A549 (cell line): ENCODE measurements at regions of chr17 and their contacts with region 1.

Region 1: GRCh38 chr17:43994272-43995149 is 9.9 kb upstream of the NAGS start:
- DNase-seq: peak; percentile 71 to 94
- ATAC-seq: peak; percentile 90 to 96
- H3K4me3 ChIP-seq: peak overlapping the region; percentile 45
- H3K27ac ChIP-seq: peak overlapping the region; percentile 70 to 86
- H3K4me1 ChIP-seq: 0 out of 3 replicates have a peak, but pooled peaks cover 3% of the 10 kb centered on the region
- CTCF ChIP-seq: peak; percentile 96
- EP300 ChIP-seq: no peak
- POLR2A ChIP-seq: no peak
- RAD21 ChIP-seq: peak; percentile 96 to 98

Region 2: DNA sequence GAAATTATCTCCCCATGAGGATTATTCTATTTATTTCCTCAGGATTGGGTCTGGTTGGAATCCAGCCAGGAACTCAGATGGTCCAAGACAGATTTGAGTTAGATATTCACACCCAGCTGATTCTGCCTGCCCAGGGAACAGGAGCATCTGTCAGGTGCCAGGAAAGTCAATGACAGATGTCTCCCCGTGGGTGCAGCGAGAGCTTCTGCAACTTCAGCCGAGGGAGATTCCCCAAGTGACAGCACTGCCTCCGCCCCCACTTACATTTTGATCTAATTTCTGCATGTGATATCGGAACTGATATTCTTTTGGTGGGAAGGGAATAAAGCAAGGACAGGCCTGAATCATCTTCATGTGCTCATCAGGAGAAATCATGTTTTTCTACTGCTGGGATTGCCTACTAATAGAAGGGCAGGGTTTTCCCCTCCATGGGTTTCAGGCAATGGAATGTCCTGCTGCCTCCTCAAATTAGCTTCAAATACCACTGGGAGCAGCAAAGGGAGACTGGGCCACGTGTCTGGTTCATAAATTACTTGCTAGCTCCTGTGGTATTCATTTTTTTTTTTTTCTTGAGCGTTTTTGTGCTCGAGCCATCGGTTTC is 526.4 kb before region 1 on chr17:
- CTCF ChIA-PET with region 1: no interaction called
- POLR2A ChIA-PET with region 1: no interaction called
- DNase-seq: no peak
- ATAC-seq: no peak
- H3K4me3 ChIP-seq: no peak overlapping the region
- H3K27ac ChIP-seq: peak overlapping the region; percentile 44 to 65; a peak in 4 of 6 replicates
- H3K4me1 ChIP-seq: peaks cover 31% of the 10 kb centered on the region
- CTCF ChIP-seq: no peak
- EP300 ChIP-seq: no peak
- POLR2A ChIP-seq: no peak
- RAD21 ChIP-seq: no peak

Region 3: DNA sequence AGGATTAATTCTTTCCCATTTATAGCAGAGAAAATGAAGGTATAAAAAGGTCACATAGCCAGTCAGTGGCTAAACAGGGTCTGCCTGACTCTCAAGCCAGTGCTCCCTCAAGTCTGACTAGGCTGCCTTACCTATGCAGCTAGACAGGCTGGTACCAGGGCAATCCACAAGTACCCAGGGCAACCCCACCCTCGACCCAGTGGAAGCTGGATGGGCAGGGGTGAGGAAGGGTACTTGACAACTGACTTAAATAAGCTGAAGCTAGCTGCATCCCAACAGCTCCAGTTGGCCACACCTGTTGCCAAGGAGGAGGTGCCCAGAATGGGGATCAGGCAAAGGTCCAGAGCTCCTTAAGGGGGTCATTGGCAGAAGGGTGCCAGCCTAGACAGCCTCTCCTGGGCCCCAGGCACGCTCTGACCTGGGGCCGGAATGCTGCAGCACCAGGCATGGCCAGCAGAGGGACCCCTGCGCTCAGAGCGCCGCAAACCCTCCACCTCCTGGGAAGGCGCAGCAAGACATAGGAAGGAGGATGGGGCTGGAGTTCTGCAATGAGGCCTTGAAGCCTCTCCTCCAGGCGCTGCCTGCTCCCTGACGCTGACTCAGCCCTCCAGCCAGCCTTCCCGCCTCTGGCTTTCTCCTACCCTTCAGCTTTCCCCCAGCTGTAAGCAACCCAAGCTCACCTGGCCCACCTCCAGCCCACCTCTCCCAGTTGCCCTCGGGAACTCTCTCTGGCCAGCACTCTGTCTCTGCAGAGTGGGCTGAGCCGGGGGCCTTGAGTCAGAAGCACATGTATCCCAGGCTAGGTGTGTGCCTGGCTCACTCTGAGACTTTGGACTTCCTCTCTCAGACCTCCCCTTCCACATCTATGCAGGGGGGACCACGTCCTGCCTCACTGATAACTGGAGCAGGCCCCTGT is 116.0 kb before region 1 on chr17:
- CTCF ChIA-PET with region 1: interaction called, 240 read pairs
- POLR2A ChIA-PET with region 1: no interaction called
- DNase-seq: peak; percentile 87 to 98
- ATAC-seq: peak; percentile 83 to 94
- H3K4me3 ChIP-seq: no peak overlapping the region
- H3K27ac ChIP-seq: peak overlapping the region; percentile 33 to 54; a peak in 4 of 6 replicates
- H3K4me1 ChIP-seq: peaks cover 5% of the 10 kb centered on the region
- CTCF ChIP-seq: peak; percentile 96
- EP300 ChIP-seq: no peak
- POLR2A ChIP-seq: no peak
- RAD21 ChIP-seq: peak; percentile 85 to 88

Region 4: DNA sequence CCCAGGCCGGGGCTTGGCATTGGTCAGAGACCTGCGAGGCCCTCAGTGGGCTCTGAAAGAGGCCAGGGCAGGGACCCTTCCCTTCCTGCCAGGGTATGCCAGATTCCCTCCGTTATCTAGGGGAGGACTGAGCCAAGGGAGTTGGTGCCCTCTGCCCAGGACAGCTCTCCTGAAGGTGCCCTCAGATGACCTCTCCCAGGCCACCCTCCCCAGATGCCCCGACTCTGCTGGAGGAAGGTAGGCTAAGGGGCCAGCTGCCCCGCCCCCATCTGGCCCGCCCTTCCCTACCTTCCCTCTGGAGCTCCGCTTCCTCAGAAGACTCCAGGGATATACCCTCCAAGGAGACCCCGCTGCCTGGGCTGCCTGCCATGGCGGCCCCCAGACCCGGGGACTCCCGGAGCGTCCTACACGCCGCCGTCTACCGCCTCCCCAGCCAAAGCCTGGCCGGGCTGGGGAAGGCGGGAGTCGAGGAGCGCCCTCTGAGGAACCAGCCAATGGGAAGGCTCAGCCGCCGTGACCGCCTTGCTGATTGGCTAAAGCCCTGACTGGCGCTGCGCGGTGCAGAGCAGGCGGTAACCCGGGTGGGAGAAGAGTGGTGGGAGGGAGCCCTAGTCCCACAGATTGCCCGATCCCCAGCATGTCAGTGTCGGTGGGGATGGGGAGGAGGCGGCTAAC is 94.2 kb before region 1 on chr17:
- CTCF ChIA-PET with region 1: interaction called, 11 read pairs
- POLR2A ChIA-PET with region 1: no interaction called
- DNase-seq: peak; percentile 88 to 100
- ATAC-seq: peak; percentile 95 to 99
- H3K4me3 ChIP-seq: peak overlapping the region; percentile 55
- H3K27ac ChIP-seq: peak overlapping the region; percentile 76 to 88
- H3K4me1 ChIP-seq: peaks cover 14% of the 10 kb centered on the region
- CTCF ChIP-seq: no peak
- EP300 ChIP-seq: no peak
- POLR2A ChIP-seq: peak; percentile 32; the same call in 1 of the 2 replicates
- RAD21 ChIP-seq: no peak

Region 5: GRCh38 chr17:43927060-43927864 is 67.2 kb before region 1 on chr17:
- CTCF ChIA-PET with region 1: interaction called, 28 read pairs
- POLR2A ChIA-PET with region 1: no interaction called
- DNase-seq: no peak
- ATAC-seq: no peak
- H3K4me3 ChIP-seq: no peak overlapping the region
- H3K27ac ChIP-seq: no peak overlapping the region
- H3K4me1 ChIP-seq: peaks cover 14% of the 10 kb centered on the region
- CTCF ChIP-seq: no peak
- EP300 ChIP-seq: no peak
- POLR2A ChIP-seq: no peak
- RAD21 ChIP-seq: no peak

Region 6: GRCh38 chr17:43983515-43984411 is 10.7 kb before region 1 on chr17:
- CTCF ChIA-PET with region 1: interaction called, 107 read pairs
- POLR2A ChIA-PET with region 1: no interaction called
- DNase-seq: peak in 1 of 2 experiments; percentile 34
- ATAC-seq: peak; percentile 67 to 77
- H3K4me3 ChIP-seq: peak overlapping the region; percentile 59
- H3K27ac ChIP-seq: peak overlapping the region; percentile 58 to 81; a peak in 5 of 6 replicates
- H3K4me1 ChIP-seq: 0 out of 3 replicates have a peak, but pooled peaks cover 8% of the 10 kb centered on the region
- CTCF ChIP-seq: peak; percentile 53
- EP300 ChIP-seq: no peak
- POLR2A ChIP-seq: no peak
- RAD21 ChIP-seq: no peak

Region 7: DNA sequence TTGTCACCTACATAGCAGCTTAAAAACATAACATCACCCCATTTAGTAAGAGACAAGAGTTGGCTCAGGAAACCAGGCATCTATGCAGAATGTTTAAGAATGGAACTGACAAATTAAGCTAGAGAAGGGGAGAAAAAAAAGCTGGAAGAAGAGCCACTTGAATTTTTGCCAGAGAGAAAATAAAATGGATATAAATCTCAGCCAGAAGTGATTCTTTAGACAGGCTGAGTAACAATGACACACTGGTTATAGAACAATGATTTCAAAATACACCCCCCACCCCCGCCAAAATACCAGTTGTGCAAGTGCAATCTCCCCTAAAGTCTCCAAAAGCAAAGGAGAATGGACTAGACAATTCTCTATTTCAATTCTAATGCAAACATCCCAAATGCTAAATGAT is 49.6 kb after region 1 on chr17:
- CTCF ChIA-PET with region 1: interaction called, 17 read pairs
- POLR2A ChIA-PET with region 1: no interaction called
- DNase-seq: no peak
- ATAC-seq: no peak
- H3K4me3 ChIP-seq: no peak overlapping the region
- H3K27ac ChIP-seq: 0 out of 6 replicates have a peak overlapping the region, but pooled peaks of 1 of the 2 experiments have one; percentile 0
- H3K4me1 ChIP-seq: peaks cover 11% of the 10 kb centered on the region
- CTCF ChIP-seq: no peak
- EP300 ChIP-seq: no peak
- POLR2A ChIP-seq: no peak
- RAD21 ChIP-seq: no peak